ENCODE measurements at regions of chr11 and their contacts with region 1.

Region 1: GRCh38 chr11:3854977-3855807 is at the start of gene STIM1:
- DNase-seq: peak; percentile 97
- ATAC-seq: peak; percentile 79
- H3K4me3 Mint-ChIP-seq: peak within 1 kb of the TSS; percentile 94
- H3K27ac Mint-ChIP-seq: peak within 1 kb of the TSS; percentile 85; the same call in 1 of the 2 replicates
- H3K4me1 Mint-ChIP-seq: peaks cover 43% of the 10 kb centered on the region
- H3K27me3 Mint-ChIP-seq: peaks cover 26% of the 10 kb centered on the region
- CTCF ChIP-seq: peak; percentile 89
- total RNA-seq, gene STIM1: 17.0 to 18.0 TPM (median 17.4 TPM) in 3 replicates

Region 2: GRCh38 chr11:3807909-3808860 is 47.0 kb before region 1 on chr11 and contains the start of gene PGAP2:
- CTCF ChIA-PET with region 1: interaction called, 23 read pairs
- POLR2A ChIA-PET with region 1: no interaction called
- DNase-seq: peak; percentile 83
- ATAC-seq: peak; percentile 91
- H3K4me3 Mint-ChIP-seq: peak within 1 kb of the TSS; percentile 96
- H3K27ac Mint-ChIP-seq: peak within 1 kb of the TSS; percentile 97
- H3K4me1 Mint-ChIP-seq: peaks cover 11% of the 10 kb centered on the region
- H3K27me3 Mint-ChIP-seq: no peaks in the 10 kb centered on the region; the same call in 1 of the 2 replicates
- CTCF ChIP-seq: peak; percentile 65
- total RNA-seq, gene PGAP2: 38.2 to 43.0 TPM (median 40.7 TPM) in 3 replicates

Region 3: GRCh38 chr11:3834664-3835461 is 20.3 kb before region 1 on chr11:
- CTCF ChIA-PET with region 1: interaction called, 165 read pairs
- POLR2A ChIA-PET with region 1: interaction called, 17 read pairs
- DNase-seq: peak; percentile 28
- ATAC-seq: peak; percentile 53
- H3K4me3 Mint-ChIP-seq: peak overlapping the region; percentile 10
- H3K27ac Mint-ChIP-seq: no peak overlapping the region
- H3K4me1 Mint-ChIP-seq: peaks cover 53% of the 10 kb centered on the region
- H3K27me3 Mint-ChIP-seq: no peaks in the 10 kb centered on the region
- CTCF ChIP-seq: no peak

Region 4: GRCh38 chr11:3867209-3868091 is 12.3 kb after region 1 on chr11:
- CTCF ChIA-PET with region 1: interaction called, 40 read pairs
- POLR2A ChIA-PET with region 1: no interaction called
- DNase-seq: no peak
- ATAC-seq: no peak
- H3K4me3 Mint-ChIP-seq: no peak overlapping the region
- H3K27ac Mint-ChIP-seq: no peak overlapping the region
- H3K4me1 Mint-ChIP-seq: peaks cover 8% of the 10 kb centered on the region
- H3K27me3 Mint-ChIP-seq: peaks cover 3% of the 10 kb centered on the region; the same call in 1 of the 2 replicates
- CTCF ChIP-seq: no peak

Region 5: GRCh38 chr11:3903207-3903896 is 48.2 kb after region 1 on chr11:
- CTCF ChIA-PET with region 1: interaction called, 13 read pairs
- POLR2A ChIA-PET with region 1: no interaction called
- DNase-seq: no peak
- ATAC-seq: no peak
- H3K4me3 Mint-ChIP-seq: no peak overlapping the region
- H3K27ac Mint-ChIP-seq: no peak overlapping the region
- H3K4me1 Mint-ChIP-seq: peaks cover 15% of the 10 kb centered on the region
- H3K27me3 Mint-ChIP-seq: no peaks in the 10 kb centered on the region; the same call in 1 of the 2 replicates
- CTCF ChIP-seq: no peak

Region 6: GRCh38 chr11:3959015-3959919 is 104.1 kb after region 1 on chr11:
- CTCF ChIA-PET with region 1: interaction called, 25 read pairs
- POLR2A ChIA-PET with region 1: no interaction called
- DNase-seq: no peak
- ATAC-seq: peak; percentile 60
- H3K4me3 Mint-ChIP-seq: no peak overlapping the region
- H3K27ac Mint-ChIP-seq: no peak overlapping the region
- H3K4me1 Mint-ChIP-seq: no peaks in the 10 kb centered on the region
- H3K27me3 Mint-ChIP-seq: no peaks in the 10 kb centered on the region
- CTCF ChIP-seq: no peak

Region 7: GRCh38 chr11:4072668-4073285 is 217.6 kb after region 1 on chr11:
- CTCF ChIA-PET with region 1: interaction called, 403 read pairs
- POLR2A ChIA-PET with region 1: interaction called, 3 read pairs
- DNase-seq: no peak
- ATAC-seq: peak; percentile 90
- H3K4me3 Mint-ChIP-seq: no peak overlapping the region
- H3K27ac Mint-ChIP-seq: no peak overlapping the region
- H3K4me1 Mint-ChIP-seq: no peaks in the 10 kb centered on the region
- H3K27me3 Mint-ChIP-seq: peaks cover 8% of the 10 kb centered on the region; the same call in 1 of the 2 replicates
- CTCF ChIP-seq: peak; percentile 73

Measured in WTC11 (cell line).